ENCODE measurements at regions of chr7 and their contacts with region 1.

Region 1: GRCh38 chr7:73451780-73452398 is 18.3 kb downstream of the FZD9 start:
- DNase-seq: no peak
- ATAC-seq: peak; percentile 67

Region 2: DNA sequence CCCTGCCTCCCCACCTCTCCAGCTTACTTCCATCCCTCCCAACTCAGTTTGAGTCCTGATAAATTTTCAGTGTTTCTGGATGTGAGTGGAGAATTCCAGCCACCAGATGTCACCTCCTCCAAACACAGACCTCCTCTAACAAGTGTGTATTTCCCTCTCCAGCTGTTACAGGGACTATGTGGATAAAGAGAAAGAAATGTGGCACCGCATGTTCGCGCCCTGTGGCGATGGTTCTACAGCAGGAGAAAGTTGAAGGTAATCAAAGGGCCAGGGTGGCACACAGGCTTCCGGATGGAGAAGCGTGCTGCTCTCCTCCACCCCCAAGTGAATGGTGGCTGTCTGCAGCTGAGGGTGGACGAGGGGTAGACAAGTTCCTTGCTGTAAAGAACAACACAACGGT is 109.2 kb before region 1 on chr7:
- intact Hi-C with region 1: loop called (anchors 5 kb)
- DNase-seq: no peak
- ATAC-seq: peak; percentile 84

Region 3: DNA sequence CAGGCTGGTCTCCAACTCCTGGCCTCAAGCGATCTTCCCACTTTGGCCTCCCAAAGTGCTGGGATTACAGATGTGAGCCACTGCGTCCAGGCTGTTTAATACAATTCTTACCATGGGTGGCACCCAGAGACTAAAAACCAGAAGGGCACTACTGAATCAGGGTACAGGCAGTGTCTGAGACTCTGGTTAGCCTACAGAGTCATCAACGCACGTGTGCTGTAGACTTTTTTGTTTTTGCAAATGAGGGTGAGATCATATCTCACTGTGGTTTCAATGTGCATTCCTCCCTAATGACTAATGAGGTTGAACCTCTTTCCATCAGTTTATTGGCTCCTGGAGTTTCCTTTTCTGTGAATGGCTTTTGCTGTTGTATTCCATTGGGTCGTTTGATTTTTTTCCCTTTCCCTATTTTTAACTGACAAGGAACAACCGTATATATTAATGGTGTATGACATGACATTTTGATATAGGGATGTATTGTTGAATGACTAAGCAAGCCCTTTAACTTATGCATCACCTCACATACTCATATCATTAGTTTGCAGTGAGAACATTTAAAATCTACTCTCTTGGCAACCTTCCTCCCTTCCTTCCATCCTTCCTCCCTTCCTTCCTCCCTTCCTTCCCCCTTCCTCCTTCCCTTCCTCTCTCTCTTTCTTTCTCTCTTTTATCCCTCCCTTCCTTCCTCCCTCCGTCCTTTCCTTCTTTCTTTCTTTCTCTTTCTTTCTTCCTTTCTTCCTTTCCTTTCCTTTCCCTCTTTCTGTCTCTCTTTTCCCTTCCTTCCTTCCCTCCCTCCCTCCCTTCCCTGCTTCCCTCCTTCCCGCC is 399.7 kb after region 1 on chr7:
- intact Hi-C with region 1: no loop called
- DNase-seq: no peak
- ATAC-seq: peak; percentile 54